ENCODE measurements at regions of chr3 and their contacts with region 1.

Region 1: GRCh38 chr3:140972833-140973232 is 31.2 kb downstream of the SLC25A36 start:
- DNase-seq: no peak
- H3K4me3 Mint-ChIP-seq: no peak overlapping the region
- H3K27ac Mint-ChIP-seq: no peak overlapping the region
- H3K4me1 Mint-ChIP-seq: no peaks in the 10 kb centered on the region
- H3K27me3 Mint-ChIP-seq: no peaks in the 10 kb centered on the region
- CTCF ChIP-seq: peak; percentile 15

Region 2: GRCh38 chr3:140898340-140899180 is 74.3 kb before region 1 on chr3:
- CTCF ChIA-PET with region 1: no interaction called
- intact Hi-C with region 1: loop called (anchors 1 kb)
- DNase-seq: peak; percentile 70
- H3K4me3 Mint-ChIP-seq: no peak overlapping the region
- H3K27ac Mint-ChIP-seq: no peak overlapping the region
- H3K4me1 Mint-ChIP-seq: no peaks in the 10 kb centered on the region
- H3K27me3 Mint-ChIP-seq: peaks cover 30% of the 10 kb centered on the region
- CTCF ChIP-seq: no peak

Region 3: GRCh38 chr3:140922634-140923033 is 50.2 kb before region 1 on chr3:
- CTCF ChIA-PET with region 1: interaction called, 3 read pairs
- intact Hi-C with region 1: loop called (anchors 1 kb)
- DNase-seq: no peak
- H3K4me3 Mint-ChIP-seq: no peak overlapping the region
- H3K27ac Mint-ChIP-seq: no peak overlapping the region
- H3K4me1 Mint-ChIP-seq: no peaks in the 10 kb centered on the region
- H3K27me3 Mint-ChIP-seq: peaks cover 44% of the 10 kb centered on the region
- CTCF ChIP-seq: peak; percentile 61

Region 4: DNA sequence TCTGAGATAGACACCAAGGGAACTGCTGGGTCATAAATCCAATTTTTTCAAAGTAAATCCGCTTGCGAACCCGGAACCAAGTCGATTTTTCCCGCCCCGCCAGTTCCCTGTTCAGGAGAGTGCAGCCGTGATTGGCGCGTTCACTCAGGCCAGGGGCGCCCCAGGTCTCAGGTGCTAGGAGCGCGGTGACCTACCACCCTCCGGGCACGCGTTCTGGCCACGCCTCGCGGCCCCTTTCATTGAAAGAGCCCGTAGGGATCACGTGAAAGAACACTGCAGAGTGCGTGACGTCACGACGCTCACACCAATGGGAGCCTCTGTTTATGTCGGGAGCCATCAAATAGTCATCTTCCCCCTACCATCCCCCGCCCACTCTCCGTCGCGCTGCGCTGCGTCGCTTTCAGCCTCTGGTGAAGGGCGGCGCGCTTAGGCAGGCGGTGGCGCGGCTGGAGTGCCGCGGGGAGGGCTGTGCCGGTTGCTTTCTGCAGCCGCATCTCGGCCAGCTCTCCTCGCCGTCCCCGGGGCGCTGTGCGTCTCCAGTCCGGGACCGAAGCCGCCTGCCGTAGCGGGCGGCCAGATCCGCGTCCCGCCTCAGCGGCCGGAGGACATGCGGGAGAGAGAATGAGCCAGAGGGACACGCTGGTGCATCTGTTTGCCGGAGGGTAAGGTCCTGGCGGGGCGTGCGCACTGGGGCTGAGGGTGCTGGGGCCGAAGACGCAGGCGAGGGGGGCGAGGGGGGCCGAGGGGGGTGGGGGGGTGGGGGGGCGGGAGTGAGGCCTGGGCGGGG is 31.2 kb before region 1 on chr3 and contains the start of gene SLC25A36:
- CTCF ChIA-PET with region 1: no interaction called
- intact Hi-C with region 1: loop called (anchors 1 kb)
- DNase-seq: peak; percentile 99
- H3K4me3 Mint-ChIP-seq: peak within 1 kb of the TSS; percentile 98
- H3K27ac Mint-ChIP-seq: peak within 1 kb of the TSS; percentile 97
- H3K4me1 Mint-ChIP-seq: peaks cover 32% of the 10 kb centered on the region
- H3K27me3 Mint-ChIP-seq: peaks cover 5% of the 10 kb centered on the region
- CTCF ChIP-seq: no peak
- total RNA-seq, gene SLC25A36: 107 and 114 TPM in 2 replicates

Measured in Calu3 (cell line).